Right lobe of liver (tissue), 6 donors: ENCODE measurements at regions of chr18 and their contacts with region 1.

Region 1: GRCh38 chr18:45282101-45282812 is 333.0 kb upstream of the SLC14A2 start:
- DNase-seq: no peak
- ATAC-seq: peak; percentile 39 to 73 (median 65)
- H3K4me3 ChIP-seq: no peak overlapping the region
- H3K27ac ChIP-seq: no peak overlapping the region
- H3K4me1 ChIP-seq: no peaks in the 10 kb centered on the region
- H3K27me3 ChIP-seq: no peaks in the 10 kb centered on the region
- CTCF ChIP-seq: peak in 2 of 4 donors; percentile 5 to 21
- POLR2A ChIP-seq: no peak

Region 2: DNA sequence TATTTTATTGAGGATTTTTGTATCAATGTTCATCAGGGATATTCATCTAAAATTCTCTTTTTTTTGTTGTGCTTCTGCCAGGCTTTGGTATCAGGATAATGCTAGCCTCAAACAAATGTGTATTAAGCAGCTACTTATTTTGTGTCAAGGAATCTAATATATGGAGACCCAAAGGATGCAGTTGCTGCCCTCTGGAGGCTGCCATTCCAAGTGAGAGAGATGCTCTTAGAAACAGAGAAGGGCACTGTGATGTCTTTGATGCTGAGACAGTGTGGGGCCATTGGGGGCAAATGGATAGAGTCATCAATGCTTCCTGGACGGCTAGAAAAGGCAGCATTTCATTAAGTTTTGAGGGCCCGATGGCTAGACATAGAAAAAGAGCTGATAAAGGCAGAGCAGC is 309.0 kb before region 1 on chr18:
- intact Hi-C with region 1: no loop called
- DNase-seq: no peak
- ATAC-seq: peak in 1 of 4 donors; percentile 37
- H3K4me3 ChIP-seq: no peak overlapping the region
- H3K27ac ChIP-seq: no peak overlapping the region
- H3K4me1 ChIP-seq: no peaks in the 10 kb centered on the region
- H3K27me3 ChIP-seq: no peaks in the 10 kb centered on the region
- CTCF ChIP-seq: peak in 3 of 4 donors; percentile 12 to 29 (median 15)
- POLR2A ChIP-seq: no peak

Region 3: GRCh38 chr18:45379903-45380302 is 97.6 kb after region 1 on chr18:
- intact Hi-C with region 1: loop called in 1 of 2 experiments (anchors 10 kb)
- DNase-seq: no peak
- ATAC-seq: no peak
- H3K4me3 ChIP-seq: no peak overlapping the region
- H3K27ac ChIP-seq: no peak overlapping the region
- H3K4me1 ChIP-seq: no peaks in the 10 kb centered on the region
- H3K27me3 ChIP-seq: no peaks in the 10 kb centered on the region
- CTCF ChIP-seq: no peak
- POLR2A ChIP-seq: no peak